ENCODE measurements at regions of chr19 and their contacts with region 1.

Region 1: GRCh38 chr19:48674921-48675824 is 2.4 kb upstream of the NTN5 start:
- DNase-seq: peak; percentile 96
- H3K4me3 ChIP-seq: no peak overlapping the region
- H3K27ac ChIP-seq: peak overlapping the region in 1 of 2 experiments; percentile 1; a peak in 1 of 4 replicates
- H3K4me1 ChIP-seq: peaks cover 0 to 8% of the 10 kb centered on the region in 2 experiments; a peak in 1 of 4 replicates
- H3K27me3 ChIP-seq: no peaks in the 10 kb centered on the region
- CTCF ChIP-seq: peak; percentile 82
- EP300 ChIP-seq: no peak
- RAD21 ChIP-seq: peak; percentile 79

Region 2: DNA sequence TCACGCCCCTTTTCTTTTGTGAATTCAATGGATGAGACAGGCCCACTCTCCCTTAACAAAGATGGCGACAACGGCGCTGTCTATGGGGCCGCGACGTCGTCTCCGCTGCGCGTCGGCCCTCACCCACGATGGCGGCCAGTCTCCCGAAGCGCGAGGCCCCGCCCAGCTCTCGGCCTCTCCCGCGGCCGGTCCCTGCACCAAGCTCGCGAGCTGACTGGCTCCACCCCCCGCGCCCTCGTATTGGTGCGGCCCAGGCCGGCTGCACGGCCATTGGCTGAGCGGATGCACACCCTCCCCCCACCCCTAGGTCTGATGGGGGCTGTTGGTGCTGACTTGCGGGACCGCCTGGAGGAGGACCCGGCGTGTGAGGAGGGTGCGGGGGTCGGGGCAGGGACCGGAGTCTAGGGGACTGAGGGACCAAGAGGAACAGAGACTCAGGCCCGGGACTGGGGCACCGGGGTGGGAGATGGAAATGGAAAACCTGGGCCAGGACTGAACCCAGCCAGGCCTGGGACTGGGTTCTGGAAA is 51.0 kb before region 1 on chr19:
- CTCF ChIA-PET with region 1: no interaction called
- POLR2A ChIA-PET with region 1: no interaction called
- DNase-seq: peak; percentile 97
- H3K4me3 ChIP-seq: peak overlapping the region; percentile 64 to 68
- H3K27ac ChIP-seq: peak overlapping the region; percentile 78 to 98
- H3K4me1 ChIP-seq: peaks cover 4 to 26% of the 10 kb centered on the region in 2 experiments; a peak in 2 of 4 replicates
- H3K27me3 ChIP-seq: no peaks in the 10 kb centered on the region
- CTCF ChIP-seq: no peak
- EP300 ChIP-seq: no peak
- RAD21 ChIP-seq: no peak

Region 3: GRCh38 chr19:48646001-48646721 is 29.0 kb before region 1 on chr19 and contains the start of gene CA11:
- CTCF ChIA-PET with region 1: interaction called, 35 read pairs
- POLR2A ChIA-PET with region 1: interaction called, 7 read pairs
- DNase-seq: peak; percentile 96
- H3K4me3 ChIP-seq: peak within 1 kb of the TSS; percentile 43 to 74
- H3K27ac ChIP-seq: peak within 1 kb of the TSS; percentile 54 to 69
- H3K4me1 ChIP-seq: peaks cover 4 to 6% of the 10 kb centered on the region in 2 experiments; a peak in 2 of 4 replicates
- H3K27me3 ChIP-seq: no peaks in the 10 kb centered on the region
- CTCF ChIP-seq: peak; percentile 76
- EP300 ChIP-seq: no peak
- RAD21 ChIP-seq: peak; percentile 90
- polyA plus RNA-seq, gene CA11: 13.1 and 13.5 TPM in 2 replicates

Region 4: DNA sequence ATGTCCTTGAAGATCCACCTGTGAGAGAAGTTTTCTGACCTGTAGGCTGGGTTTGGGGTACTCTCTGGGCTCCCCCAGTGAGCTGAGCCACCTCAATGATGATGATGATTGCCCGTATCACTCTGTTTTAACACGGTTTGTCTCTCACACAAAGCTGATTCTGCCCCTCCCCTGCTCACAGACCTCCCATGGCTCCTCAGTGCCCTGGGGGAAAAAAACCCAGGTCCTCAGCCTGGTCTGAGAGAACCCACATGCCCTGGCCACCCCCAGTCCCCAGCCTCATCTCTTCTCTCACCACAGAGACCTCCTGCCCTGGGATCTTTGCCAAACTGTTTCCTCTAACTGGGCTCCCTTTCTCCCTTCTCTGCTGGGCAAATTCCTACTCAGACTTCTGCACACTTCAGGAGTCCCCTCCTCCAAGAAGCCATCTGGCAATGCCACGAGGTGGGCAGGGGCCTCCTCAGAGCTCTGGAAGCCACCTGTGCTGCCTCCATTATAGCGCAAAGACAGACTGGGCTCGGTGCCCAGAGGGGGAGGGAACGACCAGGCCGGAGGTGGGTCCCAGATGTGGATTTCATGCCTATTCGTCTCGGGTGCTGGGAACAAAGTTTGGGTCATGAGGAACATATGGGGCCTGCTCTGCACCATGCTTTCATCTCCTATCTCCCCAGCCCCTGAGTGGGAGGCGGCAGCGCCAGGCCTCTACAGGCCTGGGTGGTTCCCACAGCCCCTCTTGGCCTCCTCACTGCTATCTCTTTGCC is 20.7 kb before region 1 on chr19:
- CTCF ChIA-PET with region 1: interaction called, 19 read pairs
- POLR2A ChIA-PET with region 1: no interaction called
- DNase-seq: peak; percentile 74
- H3K4me3 ChIP-seq: no peak overlapping the region
- H3K27ac ChIP-seq: peak overlapping the region in 1 of 2 experiments; percentile 61; a peak in 2 of 4 replicates
- H3K4me1 ChIP-seq: peaks cover 0 to 10% of the 10 kb centered on the region in 2 experiments; a peak in 1 of 4 replicates
- H3K27me3 ChIP-seq: no peaks in the 10 kb centered on the region
- CTCF ChIP-seq: no peak
- EP300 ChIP-seq: peak in 1 of 2 experiments; percentile 26; a peak in 1 of 4 replicates
- RAD21 ChIP-seq: no peak

Region 5: GRCh38 chr19:48686088-48686487 is 10.9 kb after region 1 on chr19:
- CTCF ChIA-PET with region 1: interaction called, 12 read pairs
- POLR2A ChIA-PET with region 1: no interaction called
- DNase-seq: no peak
- H3K4me3 ChIP-seq: no peak overlapping the region
- H3K27ac ChIP-seq: no peak overlapping the region
- H3K4me1 ChIP-seq: no peaks in the 10 kb centered on the region
- H3K27me3 ChIP-seq: no peaks in the 10 kb centered on the region
- CTCF ChIP-seq: no peak
- EP300 ChIP-seq: no peak
- RAD21 ChIP-seq: no peak

Region 6: GRCh38 chr19:48713864-48714758 is 38.9 kb after region 1 on chr19:
- CTCF ChIA-PET with region 1: interaction called, 30 read pairs
- POLR2A ChIA-PET with region 1: no interaction called
- DNase-seq: peak; percentile 98
- H3K4me3 ChIP-seq: peak overlapping the region; percentile 75 to 100
- H3K27ac ChIP-seq: peak overlapping the region; percentile 77 to 85
- H3K4me1 ChIP-seq: peaks cover 8 to 30% of the 10 kb centered on the region in 2 experiments; a peak in 2 of 4 replicates
- H3K27me3 ChIP-seq: no peaks in the 10 kb centered on the region
- CTCF ChIP-seq: no peak
- EP300 ChIP-seq: no peak
- RAD21 ChIP-seq: no peak; the same call in 1 of the 2 replicates

Region 7: DNA sequence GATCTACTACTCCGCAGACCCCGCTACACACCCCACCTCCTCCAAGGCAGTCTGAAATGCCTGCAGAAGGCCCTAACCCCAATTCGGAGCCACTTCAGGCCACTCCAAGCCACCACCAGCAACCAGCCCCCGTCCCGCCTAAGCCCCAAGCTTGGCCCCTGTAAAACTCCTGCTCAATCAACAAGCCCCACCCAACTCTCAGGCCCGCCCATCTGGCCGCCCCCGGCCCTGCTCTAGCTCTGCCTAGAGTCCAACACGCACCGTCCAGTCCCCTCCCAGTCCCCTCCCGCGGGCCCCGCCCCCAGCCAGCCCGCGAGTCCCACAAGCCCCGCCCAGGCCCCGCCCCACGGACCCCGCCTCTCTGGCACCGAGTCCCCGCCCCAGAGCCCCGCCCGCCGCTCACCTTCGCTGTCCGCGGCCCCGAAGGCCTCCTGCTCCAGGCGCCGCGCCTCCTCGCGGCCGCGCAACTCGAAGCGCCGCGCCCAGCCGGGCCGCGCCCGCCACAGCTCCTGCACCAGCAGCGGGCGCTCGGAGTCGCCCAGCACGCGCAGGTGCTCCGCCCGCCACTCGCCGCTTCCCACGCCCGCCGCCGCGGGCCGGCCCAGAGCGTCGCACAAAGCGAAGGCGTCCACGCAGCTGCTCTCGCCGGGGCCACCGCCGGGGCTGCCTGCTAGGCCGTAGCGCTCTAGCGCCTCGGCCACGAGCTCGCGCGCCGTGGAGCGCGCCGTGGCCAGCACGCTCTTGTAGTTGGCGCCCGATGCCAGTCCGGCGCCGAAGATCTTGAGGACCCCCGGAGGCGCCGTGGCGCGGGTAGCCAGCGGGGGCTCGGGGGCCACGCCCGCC is 63.6 kb after region 1 on chr19:
- CTCF ChIA-PET with region 1: interaction called, 15 read pairs
- POLR2A ChIA-PET with region 1: interaction called, 3 read pairs
- DNase-seq: peak; percentile 100
- H3K4me3 ChIP-seq: peak overlapping the region; percentile 53 to 57
- H3K27ac ChIP-seq: peak overlapping the region in 1 of 2 experiments; percentile 7; a peak in 1 of 4 replicates
- H3K4me1 ChIP-seq: peaks cover 0 to 16% of the 10 kb centered on the region in 2 experiments; a peak in 1 of 4 replicates
- H3K27me3 ChIP-seq: no peaks in the 10 kb centered on the region
- CTCF ChIP-seq: no peak; the same call in 1 of the 2 replicates
- EP300 ChIP-seq: no peak
- RAD21 ChIP-seq: peak; percentile 49

Region 8: GRCh38 chr19:48760504-48761205 is 85.5 kb after region 1 on chr19:
- CTCF ChIA-PET with region 1: no interaction called
- POLR2A ChIA-PET with region 1: no interaction called
- DNase-seq: no peak
- H3K4me3 ChIP-seq: no peak overlapping the region
- H3K27ac ChIP-seq: no peak overlapping the region
- H3K4me1 ChIP-seq: no peaks in the 10 kb centered on the region
- H3K27me3 ChIP-seq: peaks cover 34% of the 10 kb centered on the region
- CTCF ChIP-seq: no peak
- EP300 ChIP-seq: no peak
- RAD21 ChIP-seq: no peak